A549 (cell line): ENCODE measurements at regions of chr12 and their contacts with region 1.

Region 1: DNA sequence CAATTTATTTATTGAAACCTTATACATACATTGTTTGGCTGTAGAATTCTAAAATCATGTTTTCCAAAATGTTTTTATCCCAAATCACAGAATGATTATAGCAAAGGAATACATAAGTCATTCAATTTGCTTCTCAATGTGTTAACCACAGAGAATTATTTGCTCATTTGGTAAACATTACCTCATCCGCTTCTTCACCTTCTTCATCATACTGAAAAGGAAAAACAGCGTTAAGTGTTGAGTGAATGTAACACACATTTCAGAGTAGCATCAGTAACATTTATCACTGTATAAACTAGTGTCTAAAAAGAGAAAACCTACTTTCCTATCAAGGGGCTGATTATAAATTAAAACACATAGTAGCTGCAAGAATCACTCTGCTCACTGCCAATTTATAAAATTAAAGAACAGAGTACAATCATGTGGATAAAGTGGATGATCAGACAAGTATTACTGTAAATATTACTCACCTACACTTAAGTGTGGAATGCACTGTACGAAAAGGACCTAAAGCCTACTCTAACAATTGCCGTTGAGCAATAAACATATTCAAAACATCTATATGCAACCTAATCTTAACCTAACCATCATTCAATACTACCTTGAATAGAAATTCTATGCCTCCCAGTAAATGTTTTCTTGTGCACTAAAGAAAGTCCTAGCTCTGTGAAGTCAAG is 18.1 kb upstream of the PHLDA1 start:
- DNase-seq: no peak
- ATAC-seq: no peak
- H3K4me3 ChIP-seq: no peak overlapping the region
- H3K27ac ChIP-seq: no peak overlapping the region
- H3K4me1 ChIP-seq: peaks cover 39% of the 10 kb centered on the region; the same call in 2 of the 3 replicates
- CTCF ChIP-seq: no peak
- EP300 ChIP-seq: no peak
- POLR2A ChIP-seq: no peak
- RAD21 ChIP-seq: no peak

Region 2: DNA sequence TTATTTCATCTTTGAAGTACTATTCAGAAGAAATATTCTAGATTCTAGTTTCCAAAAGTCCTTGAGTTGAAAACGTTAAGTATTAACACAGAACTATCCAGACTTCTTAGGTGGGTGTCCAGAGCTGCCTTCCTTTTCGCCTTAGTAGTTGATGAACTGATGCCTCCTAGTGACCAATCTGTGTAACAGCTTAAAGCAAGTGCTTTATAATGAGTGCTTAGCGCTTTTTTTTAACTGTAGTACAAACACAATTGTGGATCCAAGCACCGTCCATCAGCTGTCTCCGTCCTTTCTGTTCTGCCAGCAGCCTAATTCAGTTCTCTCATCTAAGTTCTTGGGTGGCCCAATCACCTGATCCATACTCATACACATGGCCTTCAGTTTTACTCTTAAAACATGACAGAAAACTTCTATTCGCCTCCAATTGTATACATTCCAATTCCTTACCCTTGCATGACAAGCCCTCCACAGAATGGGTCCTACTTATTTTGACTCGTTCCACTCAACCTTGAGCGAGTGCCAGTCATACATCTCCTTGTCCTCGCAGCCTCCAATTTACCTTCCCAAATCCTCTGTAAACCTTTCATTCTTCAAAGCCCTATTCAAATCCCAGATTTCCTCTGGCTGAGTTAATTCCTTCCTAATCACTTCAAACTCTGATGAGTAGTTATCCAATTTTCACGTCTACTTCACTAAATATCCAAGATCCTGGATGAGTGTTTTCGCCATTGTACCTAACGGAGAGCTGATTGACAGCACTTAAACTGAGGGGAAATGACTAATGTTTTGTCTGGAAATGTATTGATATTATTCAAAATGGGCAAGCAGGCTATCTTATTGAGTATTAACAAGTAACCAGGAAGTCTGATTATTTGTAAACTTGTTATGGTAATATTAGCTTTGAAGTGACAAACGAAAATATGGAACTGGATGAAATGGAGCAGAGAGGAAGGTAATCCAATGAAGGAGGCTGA is 12.3 kb before region 1 on chr12:
- CTCF ChIA-PET with region 1: interaction called, 17 read pairs
- POLR2A ChIA-PET with region 1: interaction called, 3 read pairs
- DNase-seq: peak; percentile 48 to 88
- ATAC-seq: peak; percentile 44 to 64; a peak in 5 of 6 replicates
- H3K4me3 ChIP-seq: no peak overlapping the region
- H3K27ac ChIP-seq: peak overlapping the region; percentile 36 to 55; a peak in 4 of 6 replicates
- H3K4me1 ChIP-seq: peaks cover 50% of the 10 kb centered on the region
- CTCF ChIP-seq: peak; percentile 90
- EP300 ChIP-seq: no peak
- POLR2A ChIP-seq: no peak
- RAD21 ChIP-seq: peak; percentile 93 to 94

Region 3: GRCh38 chr12:76206677-76207072 is 157.0 kb after region 1 on chr12:
- CTCF ChIA-PET with region 1: no interaction called
- POLR2A ChIA-PET with region 1: no interaction called
- DNase-seq: no peak
- ATAC-seq: no peak
- H3K4me3 ChIP-seq: no peak overlapping the region
- H3K27ac ChIP-seq: no peak overlapping the region
- H3K4me1 ChIP-seq: no peaks in the 10 kb centered on the region
- CTCF ChIP-seq: no peak
- EP300 ChIP-seq: no peak
- POLR2A ChIP-seq: no peak
- RAD21 ChIP-seq: no peak